BJ (cell line): ENCODE measurements at regions of chr14 and their contacts with region 1.

Region 1: DNA sequence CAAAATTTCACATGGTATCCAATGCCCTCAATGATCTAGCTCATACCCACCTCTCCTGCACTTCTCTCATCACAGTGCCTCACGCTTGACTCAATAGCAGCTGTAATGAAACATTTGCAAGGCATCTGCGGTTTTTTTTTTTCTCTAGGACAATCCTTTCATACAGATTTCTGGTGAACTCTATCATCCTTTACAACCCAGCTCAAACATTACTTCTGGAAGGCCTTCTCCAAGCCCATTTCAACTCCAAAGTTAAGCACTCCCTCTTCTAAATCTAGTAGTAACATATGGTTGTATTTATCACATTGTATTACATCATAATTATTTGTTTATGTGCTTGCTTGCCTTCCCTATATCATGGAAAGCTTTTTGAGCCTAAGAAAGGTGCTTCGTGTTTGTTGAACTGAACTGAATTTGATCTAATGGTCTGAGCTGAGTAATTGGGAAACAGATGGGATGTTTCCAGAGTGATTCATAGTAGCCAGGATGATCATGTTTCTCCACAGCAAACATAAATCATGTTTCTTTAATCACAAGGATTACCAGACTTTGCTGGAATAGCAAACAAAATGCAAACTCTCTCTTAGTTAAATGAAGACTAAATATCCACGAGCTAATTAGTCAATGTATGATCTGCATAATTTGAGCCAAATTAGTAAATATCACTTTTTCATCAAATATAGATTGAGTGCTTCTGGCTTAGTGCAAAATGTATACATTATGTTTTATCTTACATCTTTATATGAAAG is 14.3 kb downstream of the CFL2 start:
- DNase-seq: peak; percentile 82
- H3K4me3 ChIP-seq: no peak overlapping the region
- H3K27me3 ChIP-seq: no peaks in the 10 kb centered on the region
- CTCF ChIP-seq: no peak

Region 2: DNA sequence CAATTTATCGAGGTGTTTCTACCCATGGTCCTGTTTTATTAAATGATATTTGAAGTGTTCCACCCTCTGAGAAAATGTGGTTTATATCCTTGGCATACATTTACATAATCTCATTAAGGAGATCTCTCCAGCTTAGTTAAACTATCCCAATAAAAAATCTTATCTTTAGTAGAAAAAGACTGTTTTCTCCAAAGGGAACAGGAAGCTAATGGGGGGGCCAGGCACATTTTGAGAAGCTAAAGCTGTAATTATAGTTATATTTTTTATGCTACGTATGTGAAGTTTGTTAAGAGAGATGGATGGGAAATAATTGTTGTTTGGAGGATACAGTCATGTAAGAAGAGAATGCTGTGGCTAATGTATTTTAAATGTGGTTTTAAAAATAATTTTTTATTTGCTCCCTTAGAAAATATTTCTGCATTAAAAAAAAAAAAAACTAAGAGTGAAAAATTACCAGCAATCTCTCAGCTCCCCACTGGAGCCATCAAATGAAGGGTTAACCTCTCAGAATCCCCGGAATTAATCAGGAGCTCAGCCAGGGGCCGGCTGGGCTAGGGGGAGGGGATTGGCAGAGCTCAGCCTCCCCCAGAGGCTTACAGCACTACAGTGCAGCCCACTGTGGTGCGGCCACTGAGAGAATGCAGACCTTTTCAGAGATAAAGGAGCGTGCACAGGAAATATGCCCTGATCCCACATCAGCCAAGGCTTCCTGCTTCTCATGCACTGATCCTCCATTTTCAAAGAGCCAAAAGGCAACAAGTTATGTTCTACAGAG is 935.0 kb before region 1 on chr14:
- CTCF ChIA-PET with region 1: no interaction called
- POLR2A ChIA-PET with region 1: no interaction called
- DNase-seq: no peak
- H3K4me3 ChIP-seq: no peak overlapping the region
- H3K27me3 ChIP-seq: peaks cover 2% of the 10 kb centered on the region; the same call in 1 of the 2 replicates
- CTCF ChIP-seq: no peak

Region 3: DNA sequence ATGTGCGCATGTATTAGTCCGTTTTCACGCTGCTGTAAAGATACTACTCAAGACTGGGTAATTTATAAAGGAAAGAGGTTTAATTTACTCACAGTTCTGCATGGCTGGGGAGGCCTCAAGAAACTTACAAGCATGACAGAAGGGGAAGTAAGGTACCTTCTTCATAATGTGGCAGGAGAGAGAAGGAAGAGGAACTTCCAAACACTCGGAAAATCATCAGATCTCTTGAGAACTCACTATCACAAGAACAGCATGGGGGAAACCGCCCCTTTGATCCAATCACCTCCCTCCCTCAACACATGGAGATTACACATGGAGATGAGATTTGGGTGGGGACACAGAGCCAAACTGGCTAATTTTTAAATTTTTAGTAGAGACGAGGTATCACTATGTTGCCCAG is 28.3 kb before region 1 on chr14:
- CTCF ChIA-PET with region 1: interaction called, 10 read pairs
- POLR2A ChIA-PET with region 1: interaction called, 7 read pairs
- DNase-seq: no peak
- H3K4me3 ChIP-seq: no peak overlapping the region
- H3K27me3 ChIP-seq: no peaks in the 10 kb centered on the region
- CTCF ChIP-seq: no peak

Region 4: GRCh38 chr14:34714320-34715126 is 14.5 kb after region 1 on chr14 and contains the start of gene CFL2:
- CTCF ChIA-PET with region 1: interaction called, 4 read pairs
- POLR2A ChIA-PET with region 1: interaction called, 12 read pairs
- DNase-seq: no peak
- H3K4me3 ChIP-seq: peak within 1 kb of the TSS; percentile 90
- H3K27me3 ChIP-seq: no peaks in the 10 kb centered on the region
- CTCF ChIP-seq: no peak
- polyA plus RNA-seq, gene CFL2: 81.4 and 206 TPM in 2 replicates